Breast epithelium (tissue), 4 donors: ENCODE measurements at regions of chr3 and their contacts with region 1.

Region 1: GRCh38 chr3:180447136-180447535 is 154.8 kb upstream of the TTC14 start:
- DNase-seq: no peak
- H3K4me3 ChIP-seq: no peak overlapping the region
- H3K27ac ChIP-seq: no peak overlapping the region
- H3K4me1 ChIP-seq: no peaks in the 10 kb centered on the region
- H3K27me3 ChIP-seq: no peaks in the 10 kb centered on the region
- CTCF ChIP-seq: no peak
- POLR2A ChIP-seq: no peak

Region 2: GRCh38 chr3:180478695-180479094 is 31.6 kb after region 1 on chr3:
- intact Hi-C with region 1: no loop called
- DNase-seq: no peak
- H3K4me3 ChIP-seq: no peak overlapping the region
- H3K27ac ChIP-seq: no peak overlapping the region
- H3K4me1 ChIP-seq: no peaks in the 10 kb centered on the region
- H3K27me3 ChIP-seq: no peaks in the 10 kb centered on the region
- CTCF ChIP-seq: no peak
- POLR2A ChIP-seq: no peak

Region 3: DNA sequence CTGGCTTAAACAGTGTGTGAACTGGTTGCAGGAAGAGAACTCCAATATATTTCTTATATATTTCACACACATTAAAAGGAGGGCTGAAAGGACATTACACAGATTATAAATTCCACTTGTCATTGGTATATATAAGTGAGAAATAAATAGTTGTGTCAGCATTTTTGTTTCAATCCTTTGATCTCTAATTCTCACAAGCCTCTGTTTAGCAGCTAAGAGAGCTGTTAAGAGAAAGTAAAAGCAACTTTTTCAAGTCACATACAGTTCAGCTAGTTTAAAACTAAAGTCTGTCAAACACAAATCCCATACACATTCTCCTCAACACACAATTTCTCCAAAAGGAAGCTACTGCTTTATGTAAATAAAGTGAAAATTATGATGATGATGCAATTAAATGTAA is 302.7 kb after region 1 on chr3:
- intact Hi-C with region 1: loop called (anchors 10 kb)
- DNase-seq: no peak
- H3K4me3 ChIP-seq: no peak overlapping the region
- H3K27ac ChIP-seq: no peak overlapping the region
- H3K4me1 ChIP-seq: no peaks in the 10 kb centered on the region
- H3K27me3 ChIP-seq: no peaks in the 10 kb centered on the region
- CTCF ChIP-seq: no peak
- POLR2A ChIP-seq: no peak